PC-9 (cell line): ENCODE measurements at regions of chr20 and their contacts with region 1.

Region 1: GRCh38 chr20:2523919-2524708 is 12.3 kb upstream of the TMC2 start:
- DNase-seq: peak; percentile 44 to 82
- H3K4me3 ChIP-seq: peak overlapping the region; percentile 98
- H3K27ac ChIP-seq: no peak overlapping the region
- H3K4me1 ChIP-seq: no peaks in the 10 kb centered on the region
- H3K27me3 ChIP-seq: peaks cover 15% of the 10 kb centered on the region
- CTCF ChIP-seq: peak; percentile 96

Region 2: GRCh38 chr20:1810926-1811620 is 713.0 kb before region 1 on chr20:
- CTCF ChIA-PET with region 1: no interaction called
- POLR2A ChIA-PET with region 1: interaction called, 11 read pairs
- intact Hi-C with region 1: no loop called
- DNase-seq: no peak
- H3K4me3 ChIP-seq: no peak overlapping the region
- H3K27ac ChIP-seq: peak overlapping the region; percentile 86
- H3K4me1 ChIP-seq: peaks cover 58% of the 10 kb centered on the region
- H3K27me3 ChIP-seq: no peaks in the 10 kb centered on the region
- CTCF ChIP-seq: no peak

Region 3: GRCh38 chr20:2080533-2081224 is 443.4 kb before region 1 on chr20:
- CTCF ChIA-PET with region 1: interaction called, 13 read pairs
- POLR2A ChIA-PET with region 1: no interaction called
- intact Hi-C with region 1: no loop called
- DNase-seq: no peak
- H3K4me3 ChIP-seq: no peak overlapping the region
- H3K27ac ChIP-seq: no peak overlapping the region
- H3K4me1 ChIP-seq: no peaks in the 10 kb centered on the region
- H3K27me3 ChIP-seq: peaks cover 68% of the 10 kb centered on the region
- CTCF ChIP-seq: no peak

Region 4: DNA sequence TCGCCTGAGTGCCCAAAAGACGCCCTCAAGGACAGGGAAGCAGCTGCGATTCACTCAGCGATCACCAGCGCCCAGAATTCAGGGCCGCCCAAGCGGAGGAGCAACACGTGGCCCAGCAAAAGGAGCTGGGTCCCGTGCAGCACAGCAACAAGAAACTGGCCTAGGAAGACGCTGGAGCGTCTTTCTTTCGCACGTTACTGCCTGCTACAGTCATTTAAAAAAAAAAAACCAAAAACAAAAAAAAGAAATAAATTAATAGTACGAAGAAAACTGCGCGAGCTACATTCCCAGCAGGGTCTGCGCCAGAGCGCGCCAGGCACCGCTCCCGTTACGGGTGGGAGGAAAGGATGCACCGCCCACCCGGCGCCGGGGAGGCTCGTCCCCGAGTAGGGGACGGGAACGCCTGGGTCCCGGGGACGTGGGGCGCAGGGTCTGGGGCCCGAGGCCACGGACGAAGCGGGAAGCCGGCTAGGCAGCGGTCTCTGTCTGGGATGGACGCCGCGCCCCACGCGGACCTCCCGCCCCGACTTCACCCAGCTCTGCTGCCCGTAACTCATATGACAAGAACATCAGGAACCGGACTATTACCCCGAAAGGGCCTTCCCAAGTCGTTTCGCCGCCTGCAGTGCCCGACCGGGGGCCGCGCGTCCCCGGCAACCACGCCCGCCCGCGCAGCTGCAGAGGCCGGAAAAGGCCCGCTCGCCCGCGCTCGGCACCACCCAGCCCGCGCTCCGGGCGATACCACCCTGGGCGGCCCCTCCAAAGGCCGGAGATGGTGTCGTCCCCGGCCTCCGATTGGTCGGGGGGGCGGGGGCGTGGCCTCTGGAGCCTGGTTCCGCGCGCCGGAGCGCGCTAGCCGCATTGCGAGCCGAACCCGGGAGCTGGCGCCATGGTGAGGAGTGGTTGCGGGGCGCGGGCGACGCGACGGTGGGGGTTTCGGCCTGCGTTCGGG is 127.9 kb after region 1 on chr20 and contains the start of gene NOP56:
- CTCF ChIA-PET with region 1: no interaction called
- POLR2A ChIA-PET with region 1: interaction called, 9 read pairs
- intact Hi-C with region 1: loop called (anchors 1 kb)
- DNase-seq: peak; percentile 74 to 98
- H3K4me3 ChIP-seq: peak within 1 kb of the TSS; percentile 94
- H3K27ac ChIP-seq: peak within 1 kb of the TSS; percentile 64
- H3K4me1 ChIP-seq: peaks cover 22% of the 10 kb centered on the region
- H3K27me3 ChIP-seq: no peaks in the 10 kb centered on the region
- CTCF ChIP-seq: no peak
- total RNA-seq, gene NOP56: 194 and 210 TPM in 2 replicates

Region 5: GRCh38 chr20:2900845-2901592 is 376.9 kb after region 1 on chr20:
- CTCF ChIA-PET with region 1: interaction called, 14 read pairs
- POLR2A ChIA-PET with region 1: no interaction called
- intact Hi-C with region 1: no loop called
- DNase-seq: no peak
- H3K4me3 ChIP-seq: no peak overlapping the region
- H3K27ac ChIP-seq: no peak overlapping the region
- H3K4me1 ChIP-seq: no peaks in the 10 kb centered on the region
- H3K27me3 ChIP-seq: no peaks in the 10 kb centered on the region
- CTCF ChIP-seq: no peak